Posterior cingulate gyrus (tissue), 11 donors: ENCODE measurements at regions of chr9 and their contacts with region 1.

Region 1: GRCh38 chr9:37784616-37785483 is at the start of gene EXOSC3:
- DNase-seq: peak; percentile 86 to 99 (median 93)

Region 2: GRCh38 chr9:37592108-37592951 is 192.5 kb before region 1 on chr9 and contains the start of gene TOMM5:
- intact Hi-C with region 1: loop called (anchors 10 kb)
- DNase-seq: peak; percentile 91 to 99 (median 94)

Region 3: DNA sequence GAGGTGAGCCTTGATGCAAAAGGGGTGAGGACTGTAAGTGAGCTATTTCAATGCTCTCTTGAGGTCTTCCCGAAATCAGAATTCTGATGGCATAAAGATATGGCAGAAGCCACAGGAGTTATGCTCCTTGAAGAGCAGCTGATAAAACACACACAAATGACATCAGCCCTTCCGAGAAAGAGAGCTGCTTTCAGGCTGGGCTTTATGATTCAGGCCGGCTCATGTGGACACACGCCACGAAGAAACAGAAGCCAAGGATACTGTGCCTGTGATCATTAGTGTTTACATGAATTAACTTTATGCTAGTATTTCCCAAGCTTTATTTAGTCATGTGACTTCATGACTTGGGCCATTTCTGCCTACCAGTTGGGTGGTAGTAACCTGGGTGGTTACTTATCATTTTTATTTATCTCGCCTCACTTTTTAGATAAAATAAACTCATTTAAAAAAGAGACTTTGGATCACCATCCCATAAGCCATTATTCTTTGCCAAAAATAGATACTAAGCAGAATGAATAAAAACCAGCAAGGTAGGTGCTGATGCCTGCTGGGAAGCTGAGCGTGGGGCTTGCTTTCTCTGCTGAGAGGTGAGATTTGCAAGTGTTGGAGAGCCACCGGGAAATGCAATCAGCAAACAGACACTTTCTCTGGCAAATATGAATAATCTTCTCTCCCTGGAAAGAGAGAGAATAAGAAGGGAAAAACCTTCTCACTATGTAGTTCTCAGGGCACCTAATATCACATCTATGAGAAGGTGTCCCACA is 192.0 kb after region 1 on chr9:
- intact Hi-C with region 1: no loop called
- DNase-seq: peak in 2 of 10 donors; percentile 18 to 77

Region 4: DNA sequence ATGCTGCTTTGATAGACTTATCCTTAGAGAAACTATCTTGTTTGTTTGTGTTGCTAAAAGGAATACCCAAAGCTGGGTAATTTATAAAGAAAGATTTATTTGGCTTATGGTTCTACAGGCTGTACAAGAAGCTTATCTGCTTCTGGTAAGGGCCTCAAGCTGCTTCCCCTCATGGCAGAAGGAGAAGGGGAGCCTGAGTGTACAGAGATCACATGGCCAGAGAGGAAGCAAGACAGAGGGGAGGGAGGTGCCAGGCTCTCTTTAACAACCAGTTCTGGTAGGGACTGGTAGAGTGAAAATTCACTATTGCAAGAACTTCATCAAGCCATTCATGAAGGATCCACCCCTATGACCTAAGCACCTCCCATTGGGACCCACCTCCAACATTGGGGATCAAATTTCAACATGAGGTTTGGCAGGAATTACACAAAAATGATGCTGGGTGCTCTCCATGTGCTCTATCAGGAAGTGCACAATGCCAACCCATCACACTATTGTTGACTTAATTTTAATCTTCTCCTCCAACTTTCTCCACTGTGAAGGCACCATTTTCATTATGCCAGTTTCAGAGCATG is 399.2 kb after region 1 on chr9:
- intact Hi-C with region 1: no loop called
- DNase-seq: no peak